A673 (cell line): ENCODE measurements at regions of chr3 and their contacts with region 1.

Region 1: DNA sequence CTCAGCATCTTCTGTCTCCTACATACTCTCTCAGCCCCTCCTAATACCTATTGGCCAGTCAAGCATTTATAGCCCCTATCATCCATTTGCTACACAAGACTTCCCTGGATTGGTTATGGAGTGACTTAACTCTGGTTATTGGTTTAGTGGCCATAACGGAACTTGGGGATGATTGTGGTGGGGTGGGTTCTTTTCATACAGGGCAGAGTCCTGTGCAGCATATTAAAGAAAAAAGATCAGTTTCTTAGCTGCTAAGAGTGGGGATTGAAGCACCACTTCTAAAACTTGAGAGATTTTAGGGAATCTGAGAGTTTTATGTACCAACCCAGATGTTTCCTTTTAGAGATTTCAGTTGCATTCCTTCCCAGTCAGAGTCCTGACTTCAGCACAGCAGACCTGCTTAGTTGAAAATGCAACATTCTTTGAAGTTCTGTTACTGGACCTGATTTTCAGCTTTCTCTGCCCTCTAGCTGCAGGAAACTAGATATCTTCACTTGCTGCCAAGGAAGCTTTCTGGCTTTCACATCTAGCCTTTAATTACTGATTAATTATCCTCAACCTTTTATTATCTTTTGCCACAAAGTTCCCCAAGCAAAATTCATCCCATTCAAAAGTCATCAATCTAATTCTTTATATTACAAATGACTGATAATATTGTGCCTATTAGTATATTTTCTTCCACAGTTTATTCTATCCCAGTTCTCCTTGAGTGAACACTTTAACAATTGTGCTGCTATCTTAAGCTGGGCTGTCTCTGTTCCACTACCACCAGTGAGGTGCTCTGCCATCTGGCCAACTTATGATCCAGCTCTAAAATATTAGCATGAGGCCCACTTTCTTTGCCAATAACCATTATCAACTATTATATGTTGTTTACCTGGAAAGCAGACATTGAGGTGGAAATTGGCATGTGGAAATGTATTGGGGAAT is 906.0 kb upstream of the ALCAM start:
- DNase-seq: peak; percentile 62
- H3K4me3 ChIP-seq: no peak overlapping the region
- H3K27ac ChIP-seq: no peak overlapping the region
- H3K4me1 ChIP-seq: no peaks in the 10 kb centered on the region
- H3K27me3 ChIP-seq: no peaks in the 10 kb centered on the region
- CTCF ChIP-seq: peak; percentile 61

Region 2: GRCh38 chr3:104102386-104102785 is 358.4 kb before region 1 on chr3:
- CTCF ChIA-PET with region 1: no interaction called
- POLR2A ChIA-PET with region 1: no interaction called
- intact Hi-C with region 1: loop called (anchors 10 kb)
- DNase-seq: peak; percentile 80
- H3K4me3 ChIP-seq: no peak overlapping the region
- H3K27ac ChIP-seq: no peak overlapping the region
- H3K4me1 ChIP-seq: no peaks in the 10 kb centered on the region
- H3K27me3 ChIP-seq: no peaks in the 10 kb centered on the region
- CTCF ChIP-seq: peak; percentile 77

Region 3: DNA sequence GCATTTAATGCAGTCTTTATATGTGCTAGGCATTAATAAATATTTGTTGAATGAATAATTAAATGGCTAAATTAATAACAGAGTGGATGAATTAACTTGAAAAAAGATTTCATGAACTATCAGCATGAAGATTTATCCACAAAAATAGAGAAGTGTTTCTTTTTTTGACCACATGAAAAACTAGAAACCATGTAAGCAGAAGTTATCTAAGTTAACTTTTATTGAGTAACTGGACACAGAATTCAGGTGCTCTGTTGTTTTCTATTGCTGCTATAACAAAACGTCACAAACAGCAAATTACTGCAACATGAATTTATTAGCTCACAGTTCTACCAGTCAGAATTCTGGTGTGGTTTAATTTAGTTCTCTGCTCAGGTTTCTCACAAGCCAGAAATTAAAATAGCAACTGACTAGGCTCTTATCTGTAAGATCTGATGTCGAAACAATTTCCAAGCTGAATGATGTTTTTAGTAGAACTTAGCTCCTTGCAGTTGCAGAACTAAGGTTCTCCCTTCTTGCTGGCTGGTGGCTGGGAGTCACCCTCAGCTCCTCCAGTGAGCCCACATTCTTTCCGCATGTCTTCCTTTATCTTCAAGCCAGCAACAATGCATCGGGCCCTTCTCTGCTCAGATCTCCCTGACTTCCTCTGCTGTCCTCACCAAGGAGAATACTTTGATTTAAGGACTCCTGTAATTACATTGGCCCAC is 95.8 kb after region 1 on chr3:
- CTCF ChIA-PET with region 1: no interaction called
- POLR2A ChIA-PET with region 1: no interaction called
- intact Hi-C with region 1: no loop called
- DNase-seq: no peak
- H3K4me3 ChIP-seq: no peak overlapping the region
- H3K27ac ChIP-seq: no peak overlapping the region
- H3K4me1 ChIP-seq: no peaks in the 10 kb centered on the region
- H3K27me3 ChIP-seq: no peaks in the 10 kb centered on the region
- CTCF ChIP-seq: no peak

Region 4: GRCh38 chr3:104738271-104738670 is 277.5 kb after region 1 on chr3:
- CTCF ChIA-PET with region 1: no interaction called
- POLR2A ChIA-PET with region 1: no interaction called
- intact Hi-C with region 1: no loop called
- DNase-seq: no peak
- H3K4me3 ChIP-seq: no peak overlapping the region
- H3K27ac ChIP-seq: no peak overlapping the region
- H3K4me1 ChIP-seq: no peaks in the 10 kb centered on the region
- H3K27me3 ChIP-seq: no peaks in the 10 kb centered on the region
- CTCF ChIP-seq: no peak